Calu3 (cell line): ENCODE measurements at regions of chr2 and their contacts with region 1.

Region 1: GRCh38 chr2:118882709-118883210 is 35.3 kb upstream of the EN1 start:
- DNase-seq: peak; percentile 73
- H3K4me3 Mint-ChIP-seq: peak overlapping the region; percentile 65
- H3K27ac Mint-ChIP-seq: no peak overlapping the region
- H3K4me1 Mint-ChIP-seq: peaks cover 9% of the 10 kb centered on the region
- H3K27me3 Mint-ChIP-seq: peaks cover 51% of the 10 kb centered on the region
- CTCF ChIP-seq: peak; percentile 82

Region 2: GRCh38 chr2:119025762-119026389 is 143.1 kb after region 1 on chr2:
- CTCF ChIA-PET with region 1: no interaction called
- intact Hi-C with region 1: no loop called
- DNase-seq: no peak
- H3K4me3 Mint-ChIP-seq: no peak overlapping the region
- H3K27ac Mint-ChIP-seq: no peak overlapping the region
- H3K4me1 Mint-ChIP-seq: peaks cover 7% of the 10 kb centered on the region
- H3K27me3 Mint-ChIP-seq: peaks cover 87% of the 10 kb centered on the region
- CTCF ChIP-seq: no peak

Region 3: DNA sequence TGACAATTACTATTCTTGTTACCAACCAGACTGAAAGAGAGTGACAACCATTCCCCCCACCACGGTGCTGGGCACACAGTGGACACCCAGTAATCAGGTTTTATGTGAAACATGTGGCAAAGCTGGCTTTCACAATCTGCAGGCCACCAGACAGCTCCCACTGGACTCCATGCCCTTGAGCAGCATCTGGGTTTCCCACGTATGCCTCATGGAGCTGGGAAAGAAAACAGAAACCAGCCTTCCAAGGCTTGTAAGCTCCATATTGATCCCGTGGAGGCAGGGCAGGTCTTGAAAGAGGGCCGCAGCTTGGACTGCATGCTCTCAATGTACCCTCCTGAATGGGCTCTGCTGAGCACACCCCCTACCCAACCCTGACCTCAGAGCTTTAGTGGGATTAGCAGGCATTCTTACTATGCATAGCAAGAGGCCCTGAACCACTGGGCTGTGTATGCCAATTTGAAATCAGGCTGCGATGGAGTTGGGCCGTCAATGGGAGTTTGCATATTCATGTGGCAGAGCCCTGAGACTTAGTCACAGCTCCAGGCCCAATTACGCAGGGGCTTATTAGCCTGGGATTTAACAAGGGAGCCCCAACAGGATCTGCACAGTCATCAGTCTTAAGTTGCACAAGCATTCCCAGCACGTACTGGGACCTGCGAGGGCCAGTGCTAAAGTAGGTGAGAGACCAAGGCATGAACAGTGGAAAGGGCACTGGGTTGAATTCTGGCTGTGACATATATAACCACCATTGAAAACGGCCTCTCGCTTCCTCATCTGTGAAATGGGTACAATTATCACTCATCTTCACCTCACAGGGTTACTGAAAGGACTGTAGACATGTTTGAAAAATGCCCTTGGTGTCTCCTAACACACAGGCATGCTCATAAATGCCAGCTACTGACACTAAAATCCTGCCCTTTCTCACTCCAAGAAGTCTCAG is 265.3 kb after region 1 on chr2:
- CTCF ChIA-PET with region 1: no interaction called
- intact Hi-C with region 1: no loop called
- DNase-seq: no peak
- H3K4me3 Mint-ChIP-seq: no peak overlapping the region
- H3K27ac Mint-ChIP-seq: no peak overlapping the region
- H3K4me1 Mint-ChIP-seq: no peaks in the 10 kb centered on the region
- H3K27me3 Mint-ChIP-seq: peaks cover 93% of the 10 kb centered on the region
- CTCF ChIP-seq: no peak

Region 4: DNA sequence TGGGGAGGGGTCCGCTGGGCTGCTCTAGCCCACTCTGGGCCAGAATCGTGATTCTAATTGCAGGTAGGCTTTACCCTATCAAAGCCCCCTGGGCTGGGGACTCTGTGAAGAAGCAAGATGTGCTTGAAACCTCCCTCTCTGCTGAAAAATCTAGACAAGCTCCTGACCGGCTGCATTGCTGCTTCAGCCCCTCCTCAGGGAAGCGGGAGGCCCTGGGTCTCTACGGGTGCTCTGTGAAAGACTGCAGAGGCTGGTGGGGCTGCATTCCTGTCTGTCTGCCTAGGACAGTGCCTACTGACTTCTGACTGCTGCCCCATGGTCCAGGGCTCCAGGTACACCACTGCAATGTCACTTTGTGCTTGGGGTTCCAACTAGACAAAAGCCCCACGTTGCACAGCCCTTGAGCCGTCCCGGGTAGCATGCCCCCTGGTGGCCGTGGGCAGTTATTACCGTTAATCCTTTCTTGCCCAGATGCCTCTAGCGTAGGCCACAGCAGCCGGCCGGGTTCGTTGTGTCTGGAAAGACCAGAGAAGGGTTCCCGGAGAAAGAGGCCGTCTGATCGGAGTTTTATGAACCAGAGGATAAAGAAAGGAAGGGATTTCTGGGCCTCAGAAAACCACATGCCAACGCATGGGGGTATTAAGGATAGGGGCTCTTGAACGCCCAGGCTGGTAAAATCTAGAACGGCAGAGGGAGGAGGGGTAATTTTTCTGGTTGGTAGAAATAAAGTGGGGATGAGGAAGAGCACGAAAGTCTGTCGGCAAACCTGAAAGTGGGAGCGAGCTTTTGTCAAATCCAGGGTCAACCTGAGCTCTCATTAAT is 291.7 kb after region 1 on chr2:
- CTCF ChIA-PET with region 1: no interaction called
- intact Hi-C with region 1: loop called (anchors 1 kb)
- DNase-seq: peak; percentile 80
- H3K4me3 Mint-ChIP-seq: no peak overlapping the region
- H3K27ac Mint-ChIP-seq: no peak overlapping the region
- H3K4me1 Mint-ChIP-seq: peaks cover 4% of the 10 kb centered on the region
- H3K27me3 Mint-ChIP-seq: peaks cover 16% of the 10 kb centered on the region
- CTCF ChIP-seq: peak; percentile 76

Region 5: GRCh38 chr2:119290859-119291587 is 408.3 kb after region 1 on chr2:
- CTCF ChIA-PET with region 1: interaction called, 8 read pairs
- intact Hi-C with region 1: loop called (anchors 2 kb)
- DNase-seq: peak; percentile 80
- H3K4me3 Mint-ChIP-seq: no peak overlapping the region
- H3K27ac Mint-ChIP-seq: no peak overlapping the region
- H3K4me1 Mint-ChIP-seq: no peaks in the 10 kb centered on the region
- H3K27me3 Mint-ChIP-seq: no peaks in the 10 kb centered on the region
- CTCF ChIP-seq: peak; percentile 64

Region 6: DNA sequence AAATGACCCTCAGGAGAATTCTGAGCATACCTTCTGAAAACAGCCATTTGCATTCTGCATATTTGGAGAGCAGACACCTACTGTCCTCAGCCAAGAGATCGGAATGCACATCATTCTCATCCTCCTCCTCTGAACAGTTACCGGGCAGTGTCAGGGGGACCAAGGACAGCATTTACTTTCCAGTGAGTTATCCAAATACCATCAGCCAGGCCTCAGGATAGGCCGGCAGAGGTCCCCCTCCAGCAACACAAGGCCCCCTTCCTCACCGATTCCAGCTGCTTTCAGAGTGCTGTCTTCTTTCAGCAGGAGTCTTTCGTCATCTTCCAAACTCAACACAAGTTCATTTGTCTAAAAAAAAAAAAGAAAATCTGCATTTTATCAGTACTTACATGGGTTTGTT is 428.6 kb after region 1 on chr2:
- CTCF ChIA-PET with region 1: interaction called, 7 read pairs
- intact Hi-C with region 1: loop called (anchors 5 kb)
- DNase-seq: no peak
- H3K4me3 Mint-ChIP-seq: no peak overlapping the region
- H3K27ac Mint-ChIP-seq: no peak overlapping the region
- H3K4me1 Mint-ChIP-seq: peaks cover 11% of the 10 kb centered on the region
- H3K27me3 Mint-ChIP-seq: no peaks in the 10 kb centered on the region
- CTCF ChIP-seq: no peak